ENCODE measurements at regions of chr12 and their contacts with region 1.

Region 1: DNA sequence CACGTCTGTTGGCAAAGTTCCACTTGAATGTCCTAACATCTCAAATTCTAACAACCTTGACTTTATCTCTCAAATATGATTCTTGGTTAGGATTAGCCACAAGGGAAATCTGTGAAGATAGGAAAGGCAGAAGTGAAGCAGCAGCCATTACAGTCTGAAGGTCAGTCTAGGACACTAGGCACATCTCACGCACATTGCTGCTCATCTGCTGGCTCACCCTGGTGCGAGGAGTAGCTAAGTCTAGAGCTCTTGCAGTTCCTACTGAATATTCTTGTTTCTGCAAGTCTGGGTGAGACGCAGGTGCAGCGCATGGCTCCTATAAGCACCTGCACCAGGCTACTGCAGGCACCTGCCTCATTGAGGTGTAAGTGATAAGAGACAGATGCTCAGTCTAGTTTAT is 6.4 kb upstream of the SLC25A3 start:
- DNase-seq: no peak
- ATAC-seq: no peak
- H3K4me3 ChIP-seq: no peak overlapping the region
- H3K4me3 Mint-ChIP-seq: no peak overlapping the region
- H3K27ac ChIP-seq: no peak overlapping the region
- H3K27ac Mint-ChIP-seq: no peak overlapping the region
- H3K4me1 ChIP-seq: no peaks in the 10 kb centered on the region
- H3K4me1 Mint-ChIP-seq: no peaks in the 10 kb centered on the region
- H3K27me3 ChIP-seq: no peaks in the 10 kb centered on the region
- H3K27me3 Mint-ChIP-seq: no peaks in the 10 kb centered on the region
- CTCF ChIP-seq: no peak

Region 2: DNA sequence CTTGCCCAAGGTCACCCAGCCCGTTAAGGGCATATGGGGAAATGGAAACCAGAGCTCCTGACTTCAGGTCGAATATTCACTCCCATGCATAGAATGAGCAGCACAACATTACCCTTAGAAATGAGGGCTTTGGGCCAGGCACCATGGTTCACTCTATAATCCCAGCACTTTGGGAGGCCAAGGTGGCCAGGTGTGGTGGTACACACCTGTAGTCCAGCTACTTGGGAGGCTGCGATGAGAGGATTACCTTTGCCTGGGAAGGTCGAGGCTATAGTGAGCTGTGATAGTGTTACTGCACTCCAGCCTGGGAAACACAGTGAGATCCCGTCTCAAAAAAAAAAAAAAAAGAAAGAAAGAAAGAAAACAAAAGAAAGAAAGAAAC is 412.7 kb before region 1 on chr12:
- CTCF ChIA-PET with region 1: no interaction called
- POLR2A ChIA-PET with region 1: no interaction called
- intact Hi-C with region 1: no loop called
- DNase-seq: no peak
- ATAC-seq: no peak
- H3K4me3 ChIP-seq: no peak overlapping the region
- H3K4me3 Mint-ChIP-seq: no peak overlapping the region
- H3K27ac ChIP-seq: no peak overlapping the region
- H3K27ac Mint-ChIP-seq: no peak overlapping the region
- H3K4me1 ChIP-seq: no peaks in the 10 kb centered on the region
- H3K4me1 Mint-ChIP-seq: no peaks in the 10 kb centered on the region
- H3K27me3 ChIP-seq: no peaks in the 10 kb centered on the region
- H3K27me3 Mint-ChIP-seq: peaks cover 4% of the 10 kb centered on the region
- CTCF ChIP-seq: no peak

Region 3: GRCh38 chr12:98572010-98572409 is 15.1 kb before region 1 on chr12:
- CTCF ChIA-PET with region 1: interaction called, 16 read pairs
- POLR2A ChIA-PET with region 1: no interaction called
- intact Hi-C with region 1: loop called in 1 of 2 experiments (anchors 2 kb)
- DNase-seq: no peak
- ATAC-seq: no peak
- H3K4me3 ChIP-seq: no peak overlapping the region
- H3K4me3 Mint-ChIP-seq: no peak overlapping the region
- H3K27ac ChIP-seq: no peak overlapping the region
- H3K27ac Mint-ChIP-seq: no peak overlapping the region
- H3K4me1 ChIP-seq: peaks cover 2% of the 10 kb centered on the region
- H3K4me1 Mint-ChIP-seq: peaks cover 1% of the 10 kb centered on the region
- H3K27me3 ChIP-seq: no peaks in the 10 kb centered on the region
- H3K27me3 Mint-ChIP-seq: no peaks in the 10 kb centered on the region
- CTCF ChIP-seq: no peak

Region 4: GRCh38 chr12:98618952-98619351 is 31.9 kb after region 1 on chr12:
- CTCF ChIA-PET with region 1: no interaction called
- POLR2A ChIA-PET with region 1: no interaction called
- intact Hi-C with region 1: no loop called
- DNase-seq: peak in 2 of 14 experiments; percentile 25 to 32
- ATAC-seq: no peak
- H3K4me3 ChIP-seq: no peak overlapping the region
- H3K4me3 Mint-ChIP-seq: no peak overlapping the region
- H3K27ac ChIP-seq: no peak overlapping the region
- H3K27ac Mint-ChIP-seq: no peak overlapping the region
- H3K4me1 ChIP-seq: no peaks in the 10 kb centered on the region
- H3K4me1 Mint-ChIP-seq: no peaks in the 10 kb centered on the region
- H3K27me3 ChIP-seq: no peaks in the 10 kb centered on the region
- H3K27me3 Mint-ChIP-seq: no peaks in the 10 kb centered on the region
- CTCF ChIP-seq: no peak

Region 5: GRCh38 chr12:98635657-98636323 is 48.7 kb after region 1 on chr12:
- CTCF ChIA-PET with region 1: no interaction called
- POLR2A ChIA-PET with region 1: no interaction called
- intact Hi-C with region 1: no loop called
- DNase-seq: no peak
- ATAC-seq: no peak
- H3K4me3 ChIP-seq: no peak overlapping the region
- H3K4me3 Mint-ChIP-seq: no peak overlapping the region
- H3K27ac ChIP-seq: no peak overlapping the region
- H3K27ac Mint-ChIP-seq: no peak overlapping the region
- H3K4me1 ChIP-seq: no peaks in the 10 kb centered on the region
- H3K4me1 Mint-ChIP-seq: no peaks in the 10 kb centered on the region
- H3K27me3 ChIP-seq: no peaks in the 10 kb centered on the region
- H3K27me3 Mint-ChIP-seq: no peaks in the 10 kb centered on the region
- CTCF ChIP-seq: no peak

Measured in CD4-positive, alpha-beta T cell (primary cell).